ENCODE measurements at regions of chr2 and their contacts with region 1.

Region 1: DNA sequence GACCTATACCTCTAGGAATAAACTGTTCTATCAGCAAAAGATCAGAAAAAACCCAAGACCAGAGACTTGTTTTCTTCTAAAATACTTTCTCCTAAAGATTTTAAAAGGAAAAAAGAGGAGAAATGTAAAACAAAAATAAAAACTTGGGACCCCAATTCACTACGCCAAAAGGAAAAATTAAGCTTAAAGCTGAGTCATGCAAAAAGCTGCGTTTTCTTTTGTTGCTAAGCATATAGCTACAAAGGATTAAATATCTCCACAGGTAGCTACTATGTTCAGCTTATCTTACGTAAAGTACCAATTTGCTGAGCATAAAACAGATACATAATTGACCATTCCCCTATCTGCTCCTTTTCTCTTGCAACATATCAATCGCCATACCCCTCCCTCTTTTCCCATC is 950.0 kb upstream of the NXPH2 start:
- DNase-seq: no peak
- H3K4me3 ChIP-seq: no peak overlapping the region
- H3K4me3 Mint-ChIP-seq: no peak overlapping the region
- H3K27ac Mint-ChIP-seq: no peak overlapping the region
- H3K4me1 ChIP-seq: no peaks in the 10 kb centered on the region
- H3K4me1 Mint-ChIP-seq: no peaks in the 10 kb centered on the region
- H3K27me3 ChIP-seq: no peaks in the 10 kb centered on the region
- H3K27me3 Mint-ChIP-seq: no peaks in the 10 kb centered on the region
- CTCF ChIP-seq: no peak

Region 2: GRCh38 chr2:139403948-139404347 is 326.2 kb before region 1 on chr2:
- CTCF ChIA-PET with region 1: no interaction called
- POLR2A ChIA-PET with region 1: no interaction called
- intact Hi-C with region 1: no loop called
- DNase-seq: no peak
- H3K4me3 ChIP-seq: no peak overlapping the region
- H3K4me3 Mint-ChIP-seq: no peak overlapping the region
- H3K27ac Mint-ChIP-seq: no peak overlapping the region
- H3K4me1 ChIP-seq: no peaks in the 10 kb centered on the region
- H3K4me1 Mint-ChIP-seq: no peaks in the 10 kb centered on the region
- H3K27me3 ChIP-seq: no peaks in the 10 kb centered on the region
- H3K27me3 Mint-ChIP-seq: no peaks in the 10 kb centered on the region
- CTCF ChIP-seq: no peak

Region 3: GRCh38 chr2:139778732-139779432 is 48.7 kb after region 1 on chr2:
- CTCF ChIA-PET with region 1: no interaction called
- POLR2A ChIA-PET with region 1: no interaction called
- intact Hi-C with region 1: loop called (anchors 2 kb)
- DNase-seq: no peak
- H3K4me3 ChIP-seq: no peak overlapping the region
- H3K4me3 Mint-ChIP-seq: no peak overlapping the region
- H3K27ac Mint-ChIP-seq: no peak overlapping the region
- H3K4me1 ChIP-seq: no peaks in the 10 kb centered on the region
- H3K4me1 Mint-ChIP-seq: no peaks in the 10 kb centered on the region
- H3K27me3 ChIP-seq: no peaks in the 10 kb centered on the region
- H3K27me3 Mint-ChIP-seq: no peaks in the 10 kb centered on the region
- CTCF ChIP-seq: no peak

Measured in Caco-2 (cell line).